HepG2 (cell line): ENCODE measurements at regions of chr6 and their contacts with region 1.

Region 1: GRCh38 chr6:167141667-167142432 is 15.9 kb downstream of the GPR31 start:
- DNase-seq: peak; percentile 58
- ATAC-seq: peak; percentile 88
- H3K4me3 ChIP-seq: peak overlapping the region in 1 of 3 experiments; percentile 41; a peak in 2 of 6 replicates
- H3K27ac ChIP-seq: no peak overlapping the region
- H3K4me1 ChIP-seq: peaks cover 37% of the 10 kb centered on the region
- H3K27me3 ChIP-seq: peaks cover 8 to 41% of the 10 kb centered on the region in 2 experiments; a peak in 4 of 5 replicates
- CTCF ChIP-seq: peak; percentile 99
- EP300 ChIP-seq: no peak
- POLR2A ChIP-seq: no peak
- RAD21 ChIP-seq: peak; percentile 99

Region 2: DNA sequence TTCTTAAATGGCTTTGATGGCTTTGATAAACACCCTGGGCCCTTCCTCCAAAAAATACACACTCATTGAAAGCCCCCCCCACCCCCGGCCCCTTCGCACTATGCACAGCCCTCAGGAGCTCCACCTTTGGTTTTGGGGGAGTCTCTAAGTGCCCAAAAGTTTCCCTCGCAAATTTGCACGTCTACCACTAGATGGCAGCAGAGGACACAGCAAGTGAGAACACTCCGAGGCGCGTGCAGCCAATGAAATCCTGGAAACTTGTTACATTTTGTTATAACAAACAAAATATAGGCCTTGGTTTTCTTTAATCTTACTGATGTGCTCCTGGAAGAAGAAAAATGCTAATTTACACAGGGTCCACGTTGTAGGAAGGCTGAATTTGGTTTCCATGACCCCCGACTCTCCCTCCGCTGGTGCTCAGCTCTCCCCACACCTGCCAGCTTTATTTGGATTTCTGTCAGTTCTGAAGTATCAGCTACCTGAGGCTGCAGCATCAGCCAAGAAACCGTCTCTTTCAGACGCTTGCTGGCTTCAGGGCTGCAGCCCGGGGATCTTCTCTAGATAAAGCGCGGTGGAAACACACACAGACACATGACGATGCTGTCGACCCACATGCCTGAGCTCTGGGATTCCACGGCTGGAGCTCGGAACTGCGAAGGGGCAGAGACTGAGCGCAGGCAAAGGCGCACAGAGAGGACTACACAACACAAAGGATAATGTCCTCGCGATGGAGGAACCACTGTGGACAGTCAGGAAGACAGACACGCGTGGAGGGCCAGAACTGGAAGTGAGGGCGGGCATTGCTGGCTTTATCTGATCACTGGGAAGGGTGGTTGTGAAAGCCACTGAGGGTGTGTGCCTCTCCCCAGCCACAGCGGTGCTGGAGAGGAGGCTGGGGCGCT is 366.4 kb before region 1 on chr6:
- CTCF ChIA-PET with region 1: interaction called, 5 read pairs
- POLR2A ChIA-PET with region 1: no interaction called
- in situ Hi-C with region 1: loop called (anchors 5 kb)
- intact Hi-C with region 1: no loop called
- DNase-seq: peak; percentile 75
- ATAC-seq: peak; percentile 83
- H3K4me3 ChIP-seq: peak overlapping the region in 2 of 3 experiments; percentile 11 to 49; a peak in 2 of 6 replicates
- H3K27ac ChIP-seq: no peak overlapping the region
- H3K4me1 ChIP-seq: peaks cover 5% of the 10 kb centered on the region
- H3K27me3 ChIP-seq: peaks cover 0 to 78% of the 10 kb centered on the region in 2 experiments; a peak in 4 of 5 replicates
- CTCF ChIP-seq: peak; percentile 84
- EP300 ChIP-seq: no peak
- POLR2A ChIP-seq: no peak
- RAD21 ChIP-seq: peak; percentile 70

Region 3: DNA sequence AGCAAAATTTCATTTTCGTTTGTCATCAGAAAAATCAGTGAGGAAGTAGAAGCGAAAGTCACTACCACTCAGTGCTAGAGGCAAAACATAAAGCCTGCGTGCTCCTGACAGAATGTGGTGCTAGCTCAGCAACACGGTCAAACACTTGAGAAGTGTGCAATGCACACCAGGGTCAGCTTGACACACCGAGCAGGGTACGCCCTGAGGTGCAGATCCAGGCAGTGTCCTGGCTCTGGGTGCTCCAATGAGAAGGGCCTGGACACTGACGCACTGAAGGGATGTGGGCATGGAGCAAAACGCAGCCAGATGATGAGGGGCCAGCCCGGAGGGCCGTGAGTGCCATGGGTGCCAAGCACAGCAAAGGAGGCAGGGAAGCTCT is 191.4 kb before region 1 on chr6:
- CTCF ChIA-PET with region 1: no interaction called
- POLR2A ChIA-PET with region 1: interaction called, 4 read pairs
- in situ Hi-C with region 1: no loop called
- intact Hi-C with region 1: loop called (anchors 1 kb)
- DNase-seq: no peak
- ATAC-seq: no peak
- H3K4me3 ChIP-seq: no peak overlapping the region
- H3K27ac ChIP-seq: no peak overlapping the region
- H3K4me1 ChIP-seq: peaks cover 64% of the 10 kb centered on the region
- H3K27me3 ChIP-seq: no peaks in the 10 kb centered on the region
- CTCF ChIP-seq: no peak
- EP300 ChIP-seq: no peak
- POLR2A ChIP-seq: no peak
- RAD21 ChIP-seq: no peak

Region 4: GRCh38 chr6:167020206-167020605 is 121.6 kb before region 1 on chr6:
- CTCF ChIA-PET with region 1: no interaction called
- POLR2A ChIA-PET with region 1: no interaction called
- in situ Hi-C with region 1: loop called (anchors 25 kb)
- intact Hi-C with region 1: no loop called
- DNase-seq: no peak
- ATAC-seq: no peak
- H3K4me3 ChIP-seq: no peak overlapping the region
- H3K27ac ChIP-seq: no peak overlapping the region
- H3K4me1 ChIP-seq: no peaks in the 10 kb centered on the region
- H3K27me3 ChIP-seq: no peaks in the 10 kb centered on the region
- CTCF ChIP-seq: no peak
- EP300 ChIP-seq: no peak
- POLR2A ChIP-seq: no peak
- RAD21 ChIP-seq: no peak

Region 5: GRCh38 chr6:167102318-167102717 is 39.5 kb before region 1 on chr6:
- CTCF ChIA-PET with region 1: no interaction called
- POLR2A ChIA-PET with region 1: no interaction called
- in situ Hi-C with region 1: no loop called
- intact Hi-C with region 1: loop called (anchors 1 kb)
- DNase-seq: no peak
- ATAC-seq: no peak; the same call in 2 of the 3 replicates
- H3K4me3 ChIP-seq: no peak overlapping the region
- H3K27ac ChIP-seq: no peak overlapping the region
- H3K4me1 ChIP-seq: peaks cover 24% of the 10 kb centered on the region
- H3K27me3 ChIP-seq: peaks cover 1 to 10% of the 10 kb centered on the region in 2 experiments; a peak in 3 of 5 replicates
- CTCF ChIP-seq: no peak
- EP300 ChIP-seq: no peak
- POLR2A ChIP-seq: no peak
- RAD21 ChIP-seq: no peak

Region 6: GRCh38 chr6:167130008-167130677 is 11.7 kb before region 1 on chr6:
- CTCF ChIA-PET with region 1: no interaction called
- POLR2A ChIA-PET with region 1: interaction called, 11 read pairs
- in situ Hi-C with region 1: no loop called
- intact Hi-C with region 1: no loop called
- DNase-seq: no peak
- ATAC-seq: no peak
- H3K4me3 ChIP-seq: no peak overlapping the region
- H3K27ac ChIP-seq: no peak overlapping the region
- H3K4me1 ChIP-seq: peaks cover 50% of the 10 kb centered on the region
- H3K27me3 ChIP-seq: no peaks in the 10 kb centered on the region
- CTCF ChIP-seq: no peak
- EP300 ChIP-seq: no peak
- POLR2A ChIP-seq: no peak
- RAD21 ChIP-seq: no peak